Ovary (tissue), 10 donors: ENCODE measurements at regions of chr2 and their contacts with region 1.

Region 1: GRCh38 chr2:128090945-128091725 is at the start of gene UGGT1:
- DNase-seq: peak; percentile 86 to 94 (median 91)
- H3K4me3 ChIP-seq: peak within 1 kb of the TSS; percentile 93
- H3K27ac ChIP-seq: peak within 1 kb of the TSS in 1 of 2 donors; percentile 35
- H3K4me1 ChIP-seq: no peaks in the 10 kb centered on the region
- H3K27me3 ChIP-seq: no peaks in the 10 kb centered on the region
- CTCF ChIP-seq: no peak
- EP300 ChIP-seq: no peak
- POLR2A ChIP-seq: peak; percentile 62
- total RNA-seq, gene UGGT1: 16.0 to 32.3 (median 22.5) TPM

Region 2: DNA sequence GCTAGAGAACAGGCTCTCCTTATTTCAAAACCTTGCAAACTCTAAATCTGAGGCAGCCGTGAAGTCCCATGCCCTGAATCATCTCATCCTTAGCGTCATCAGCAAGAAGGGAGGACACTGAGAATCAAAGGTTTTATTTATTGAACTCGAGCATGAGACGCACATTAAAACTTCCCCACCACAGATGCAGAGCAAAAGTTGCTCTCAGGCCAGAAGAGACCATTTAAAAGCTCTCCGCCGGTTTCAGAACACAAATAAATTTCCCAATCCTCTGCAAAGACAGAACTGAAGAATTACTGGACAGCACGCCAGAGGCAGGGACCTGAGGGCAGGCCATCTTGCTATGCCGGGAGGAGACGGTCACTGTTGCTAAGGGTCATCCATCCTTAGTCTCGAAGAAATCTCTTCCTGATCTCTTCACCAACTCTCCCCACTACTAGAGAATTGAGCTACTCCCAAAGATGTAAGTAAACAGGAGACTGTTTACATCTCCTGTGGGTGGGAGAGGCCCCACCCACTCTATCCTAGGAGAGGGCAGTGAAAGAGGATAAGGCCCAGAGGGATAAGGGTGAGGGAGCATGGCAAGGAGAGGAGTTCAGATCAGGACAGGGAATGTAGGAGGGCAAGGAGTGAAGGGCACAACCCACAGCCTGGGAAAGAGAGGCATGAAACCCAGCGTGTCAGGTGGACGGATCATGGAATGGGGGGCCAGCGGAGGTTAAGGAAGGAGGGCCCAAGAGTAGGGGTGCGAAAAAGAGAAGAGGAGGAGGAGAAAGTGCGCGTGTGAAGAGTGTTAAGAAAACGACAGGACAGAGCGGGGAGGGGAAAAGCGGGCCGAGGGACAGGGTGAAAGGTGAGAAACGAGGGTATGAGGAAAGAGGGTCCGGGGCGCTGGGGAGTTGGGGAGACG is 206.4 kb before region 1 on chr2:
- intact Hi-C with region 1: loop called in 1 of 4 experiments (anchors 10 kb)
- DNase-seq: peak in 2 of 5 donors; percentile 26 to 29
- H3K4me3 ChIP-seq: peak overlapping the region; percentile 49
- H3K27ac ChIP-seq: peak overlapping the region; percentile 75 to 92
- H3K4me1 ChIP-seq: no peaks in the 10 kb centered on the region
- H3K27me3 ChIP-seq: no peaks in the 10 kb centered on the region
- CTCF ChIP-seq: no peak
- EP300 ChIP-seq: no peak
- POLR2A ChIP-seq: no peak